ENCODE measurements at regions of chr12 and their contacts with region 1.

Region 1: DNA sequence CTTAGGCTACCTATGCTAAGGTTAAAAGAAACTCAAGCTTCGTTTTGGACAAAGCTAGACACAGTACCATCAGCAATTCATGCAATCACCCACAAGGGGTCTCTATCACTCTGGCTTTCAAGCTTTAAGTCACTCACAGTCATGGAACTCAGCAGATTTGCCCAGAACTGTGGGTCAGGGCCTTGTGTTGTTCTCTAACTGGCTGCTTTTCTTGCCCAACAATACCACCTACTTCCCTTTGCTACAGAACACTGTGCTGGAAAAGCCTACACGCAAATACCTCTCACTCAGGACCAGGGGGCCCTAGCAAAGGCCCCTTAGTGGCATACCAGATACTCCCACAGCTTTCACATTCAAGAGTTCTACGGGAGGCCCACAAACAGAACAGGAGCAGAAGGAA is 9.1 kb downstream of the NEMP1 start:
- DNase-seq: peak in 1 of 2 donors; percentile 36
- ATAC-seq: peak; percentile 90 to 99 (median 95)
- H3K4me3 ChIP-seq: no peak overlapping the region
- H3K27ac ChIP-seq: no peak overlapping the region
- H3K4me1 ChIP-seq: no peaks in the 10 kb centered on the region
- H3K27me3 ChIP-seq: no peaks in the 10 kb centered on the region
- CTCF ChIP-seq: peak; percentile 87

Region 2: DNA sequence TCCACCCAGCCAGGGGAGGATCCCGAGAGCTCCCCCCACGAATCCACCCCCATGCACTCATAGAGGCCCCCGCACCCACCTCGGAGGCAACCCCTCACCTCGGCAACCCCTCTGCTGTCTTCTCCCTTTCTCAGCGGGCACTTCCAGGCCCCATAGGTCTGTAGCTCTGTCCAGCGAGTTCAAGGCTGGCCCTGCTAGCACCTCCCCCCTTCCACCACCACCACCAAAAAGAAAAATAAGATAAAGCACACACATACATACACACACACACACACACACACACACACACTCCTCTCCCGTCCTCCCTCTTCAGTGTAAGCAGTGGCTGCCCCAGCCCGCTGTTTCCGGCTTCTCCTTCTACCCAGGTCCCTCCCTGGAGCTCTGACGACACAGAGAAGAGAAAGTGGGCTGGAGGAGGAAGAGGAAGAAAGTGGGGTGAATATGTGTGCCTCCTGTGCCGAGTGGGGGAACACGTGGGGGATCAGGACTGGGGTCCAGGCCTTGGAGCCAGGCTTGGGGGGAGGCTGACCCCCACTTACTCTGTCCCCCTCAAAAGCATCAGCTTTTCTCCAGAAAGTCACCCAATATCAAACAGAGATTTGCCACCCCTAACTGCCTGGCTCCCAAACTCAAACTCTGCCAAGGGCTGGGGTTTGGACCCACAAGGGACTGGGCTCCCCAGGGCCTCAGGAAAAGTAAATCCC is 41.7 kb after region 1 on chr12 and contains the start of gene STAT6:
- intact Hi-C with region 1: loop called (anchors 1 to 2 kb)
- DNase-seq: peak; percentile 72 to 86
- ATAC-seq: peak; percentile 43 to 66 (median 48)
- H3K4me3 ChIP-seq: peak within 1 kb of the TSS; percentile 72
- H3K27ac ChIP-seq: peak within 1 kb of the TSS; percentile 88
- H3K4me1 ChIP-seq: peaks cover 11% of the 10 kb centered on the region
- H3K27me3 ChIP-seq: no peaks in the 10 kb centered on the region
- CTCF ChIP-seq: no peak
- total RNA-seq, gene STAT6: 14.1 to 27.7 (median 18.2) TPM

Region 3: DNA sequence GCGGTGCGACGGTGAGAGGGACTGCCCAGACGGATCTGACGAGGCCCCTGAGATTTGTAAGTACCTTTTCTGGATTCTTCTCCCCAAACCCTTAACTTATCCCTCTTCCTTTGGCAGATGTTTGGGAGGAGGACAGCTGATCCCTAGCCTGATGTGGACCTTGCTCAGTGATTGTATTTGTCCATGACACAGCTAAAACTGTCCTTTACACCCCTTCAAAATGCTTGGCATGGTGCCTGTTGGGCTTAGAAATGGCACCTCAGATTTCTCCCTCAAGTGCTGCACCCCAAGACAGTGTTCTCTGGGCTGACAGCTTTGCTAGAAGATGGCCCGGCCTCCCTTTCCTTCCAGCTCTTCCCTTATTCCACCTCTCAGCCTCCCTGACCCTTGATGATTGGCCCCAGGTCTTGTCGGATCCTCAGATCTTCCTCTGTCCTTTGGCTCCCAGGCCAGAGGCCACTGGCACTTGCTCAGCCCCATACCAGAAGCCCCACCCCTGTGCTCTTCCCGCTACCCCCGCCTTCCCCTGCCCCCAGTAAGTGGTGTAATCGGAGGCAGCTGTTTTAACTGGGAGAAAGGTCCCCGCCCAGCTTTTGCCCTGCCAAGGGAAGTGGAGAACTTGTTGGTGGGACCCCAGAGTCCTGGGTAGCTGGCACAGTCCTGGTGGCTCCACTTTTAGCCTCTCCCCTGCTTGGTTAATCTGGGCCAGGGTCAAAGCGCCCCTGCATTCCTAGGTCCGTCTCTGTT is 69.2 kb after region 1 on chr12:
- intact Hi-C with region 1: no loop called
- DNase-seq: peak; percentile 91 to 94
- ATAC-seq: peak; percentile 50 to 70 (median 66)
- H3K4me3 ChIP-seq: no peak overlapping the region
- H3K27ac ChIP-seq: peak overlapping the region; percentile 30
- H3K4me1 ChIP-seq: no peaks in the 10 kb centered on the region
- H3K27me3 ChIP-seq: no peaks in the 10 kb centered on the region
- CTCF ChIP-seq: no peak

Measured in psoas muscle (tissue), 8 donors.